ENCODE measurements at regions of chr15 and their contacts with region 1.

Region 1: GRCh38 chr15:49235446-49236124 is 65.5 kb downstream of the GALK2 start:
- H3K4me3 Mint-ChIP-seq: no peak overlapping the region
- H3K27ac Mint-ChIP-seq: no peak overlapping the region
- H3K4me1 Mint-ChIP-seq: peaks cover 43% of the 10 kb centered on the region
- H3K27me3 Mint-ChIP-seq: no peaks in the 10 kb centered on the region

Region 2: GRCh38 chr15:49265911-49266310 is 30.3 kb after region 1 on chr15:
- intact Hi-C with region 1: no loop called
- H3K4me3 Mint-ChIP-seq: no peak overlapping the region
- H3K27ac Mint-ChIP-seq: no peak overlapping the region
- H3K4me1 Mint-ChIP-seq: peaks cover 11% of the 10 kb centered on the region
- H3K27me3 Mint-ChIP-seq: no peaks in the 10 kb centered on the region

Region 3: GRCh38 chr15:49290191-49290590 is 54.6 kb after region 1 on chr15:
- intact Hi-C with region 1: no loop called
- H3K4me3 Mint-ChIP-seq: no peak overlapping the region
- H3K27ac Mint-ChIP-seq: no peak overlapping the region
- H3K4me1 Mint-ChIP-seq: no peaks in the 10 kb centered on the region
- H3K27me3 Mint-ChIP-seq: no peaks in the 10 kb centered on the region

Region 4: DNA sequence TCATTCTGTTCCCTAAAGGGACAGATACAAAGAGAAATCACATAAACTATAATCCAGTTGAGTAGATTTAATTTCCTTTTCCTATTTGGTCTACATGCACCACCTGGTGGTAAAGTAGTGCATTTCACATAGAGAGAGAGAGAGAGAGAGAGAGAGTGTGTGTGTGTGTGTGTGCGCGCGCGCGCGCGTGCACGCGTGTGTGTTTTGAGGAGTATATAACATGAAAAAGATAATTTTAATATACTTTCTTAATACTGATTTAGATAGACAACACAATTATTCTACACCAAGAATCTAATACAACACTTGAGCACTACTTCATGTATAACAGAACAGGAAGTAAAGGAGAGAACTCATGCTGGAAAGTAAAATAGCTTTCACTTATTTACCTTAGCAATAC is 186.4 kb after region 1 on chr15:
- intact Hi-C with region 1: loop called (anchors 2 kb)
- H3K4me3 Mint-ChIP-seq: no peak overlapping the region
- H3K27ac Mint-ChIP-seq: no peak overlapping the region
- H3K4me1 Mint-ChIP-seq: no peaks in the 10 kb centered on the region
- H3K27me3 Mint-ChIP-seq: no peaks in the 10 kb centered on the region

Region 5: GRCh38 chr15:50315814-50316630 is 1080.4 kb after region 1 on chr15:
- intact Hi-C with region 1: loop called (anchors 10 kb)
- H3K4me3 Mint-ChIP-seq: no peak overlapping the region
- H3K27ac Mint-ChIP-seq: no peak overlapping the region
- H3K4me1 Mint-ChIP-seq: no peaks in the 10 kb centered on the region
- H3K27me3 Mint-ChIP-seq: no peaks in the 10 kb centered on the region